ENCODE measurements at regions of chr6 and their contacts with region 1.

Region 1: DNA sequence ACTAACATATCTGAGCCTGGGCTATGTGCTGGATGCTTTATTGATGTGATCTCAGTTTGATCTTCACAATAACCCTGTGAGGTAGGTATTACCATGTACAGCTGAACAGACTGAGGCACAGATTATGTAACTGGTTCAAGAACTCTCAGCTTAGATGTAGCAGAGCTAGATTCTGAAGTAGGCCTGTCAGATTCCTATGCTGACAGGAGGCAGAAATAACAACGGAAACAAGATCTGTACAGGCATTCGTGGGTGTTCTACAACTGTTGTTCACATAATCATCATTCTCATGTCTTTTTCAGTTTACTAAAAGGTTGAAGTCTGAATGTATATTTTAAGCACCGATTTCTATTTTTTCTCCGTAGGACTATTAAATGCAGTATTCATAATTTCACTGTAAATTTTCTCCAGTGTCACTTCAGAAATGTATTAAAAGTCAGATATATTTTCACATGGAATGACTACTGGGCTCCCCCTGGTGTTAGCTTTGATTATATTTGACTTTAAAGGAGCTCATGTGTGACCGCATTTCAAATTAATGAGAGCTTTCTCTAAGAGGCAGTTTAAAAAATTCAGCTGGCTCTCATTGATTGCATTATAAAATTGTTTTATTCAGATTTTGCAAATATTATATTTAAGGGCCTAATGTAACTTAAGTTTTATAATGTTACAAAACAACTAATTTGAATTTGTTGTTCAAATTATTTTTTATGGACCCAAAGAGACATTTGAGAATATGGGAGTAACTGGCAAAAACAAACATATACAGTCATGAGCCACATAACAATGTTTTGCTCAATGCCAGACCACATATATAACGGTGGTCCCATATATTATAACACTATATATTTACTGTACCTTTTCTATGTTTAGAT is 36.4 kb upstream of the SLC17A4 start:
- DNase-seq: no peak
- ATAC-seq: no peak
- H3K4me3 ChIP-seq: no peak overlapping the region
- H3K27ac ChIP-seq: no peak overlapping the region
- H3K4me1 ChIP-seq: no peaks in the 10 kb centered on the region
- H3K27me3 ChIP-seq: peaks cover 2% of the 10 kb centered on the region
- CTCF ChIP-seq: peak; percentile 77

Region 2: GRCh38 chr6:25889877-25890853 is 172.1 kb after region 1 on chr6:
- CTCF ChIA-PET with region 1: interaction called, 5 read pairs
- POLR2A ChIA-PET with region 1: no interaction called
- in situ Hi-C with region 1: no loop called
- intact Hi-C with region 1: loop called (anchors 2 kb)
- DNase-seq: peak; percentile 17
- ATAC-seq: peak; percentile 88
- H3K4me3 ChIP-seq: no peak overlapping the region
- H3K27ac ChIP-seq: no peak overlapping the region
- H3K4me1 ChIP-seq: no peaks in the 10 kb centered on the region
- H3K27me3 ChIP-seq: peaks cover 3% of the 10 kb centered on the region; the same call in 1 of the 2 replicates
- CTCF ChIP-seq: peak; percentile 60; the same call in 1 of the 2 replicates

Region 3: GRCh38 chr6:25946631-25947030 is 228.5 kb after region 1 on chr6:
- CTCF ChIA-PET with region 1: no interaction called
- POLR2A ChIA-PET with region 1: no interaction called
- in situ Hi-C with region 1: no loop called
- intact Hi-C with region 1: loop called (anchors 2 kb)
- DNase-seq: no peak
- ATAC-seq: no peak
- H3K4me3 ChIP-seq: no peak overlapping the region
- H3K27ac ChIP-seq: no peak overlapping the region
- H3K4me1 ChIP-seq: no peaks in the 10 kb centered on the region
- H3K27me3 ChIP-seq: peaks cover 3% of the 10 kb centered on the region; the same call in 1 of the 2 replicates
- CTCF ChIP-seq: no peak

Measured in Panc1 (cell line).